ENCODE measurements at regions of chr4 and their contacts with region 1.

Region 1: DNA sequence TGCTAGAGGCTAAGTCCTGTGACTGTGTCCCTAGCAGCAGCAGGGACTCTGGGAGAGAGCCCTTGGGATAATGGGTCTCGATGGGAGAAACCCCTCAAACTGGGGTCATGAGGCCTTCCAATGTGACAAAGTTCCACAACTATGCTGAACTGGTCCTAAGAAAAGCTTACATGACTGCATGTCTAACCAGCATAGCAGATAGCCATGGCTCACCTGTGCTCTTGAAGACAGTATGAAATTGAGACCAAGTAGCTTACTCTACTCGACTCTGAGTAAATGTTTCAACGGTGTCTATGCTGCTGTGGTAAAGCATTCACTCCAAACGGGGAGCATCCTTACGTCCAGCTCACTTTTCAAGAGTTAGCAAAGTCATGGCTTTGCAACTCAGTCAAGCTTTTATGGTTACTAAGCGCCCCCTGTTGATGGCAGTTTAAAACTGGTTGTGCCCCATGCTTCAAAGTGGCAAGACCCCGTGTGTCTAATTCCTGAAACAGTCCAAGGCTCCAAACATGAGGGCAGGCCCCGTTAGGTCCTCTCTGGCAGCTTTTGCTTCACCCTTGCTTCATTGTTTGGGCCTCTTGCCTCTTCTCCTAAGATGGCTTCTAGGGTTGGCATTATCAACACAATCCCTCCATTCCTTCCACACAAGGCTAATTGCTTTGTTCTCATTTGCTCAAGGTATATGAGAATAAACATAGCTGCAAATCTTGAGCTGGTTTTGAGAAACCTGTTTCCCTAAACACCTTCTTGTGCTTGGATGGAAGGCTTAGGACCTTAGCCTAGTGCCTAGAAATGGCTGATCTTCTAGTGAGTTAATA is 46.6 kb downstream of the CCNG2 start:
- DNase-seq: peak; percentile 23
- H3K4me3 ChIP-seq: no peak overlapping the region
- CTCF ChIP-seq: peak; percentile 63

Region 2: GRCh38 chr4:76504613-76505465 is 698.8 kb before region 1 on chr4:
- CTCF ChIA-PET with region 1: interaction called, 13 read pairs
- POLR2A ChIA-PET with region 1: no interaction called
- DNase-seq: no peak
- H3K4me3 ChIP-seq: no peak overlapping the region
- CTCF ChIP-seq: peak; percentile 44

Region 3: GRCh38 chr4:76704133-76704881 is 499.3 kb before region 1 on chr4:
- CTCF ChIA-PET with region 1: no interaction called
- POLR2A ChIA-PET with region 1: no interaction called
- DNase-seq: no peak
- H3K4me3 ChIP-seq: no peak overlapping the region
- CTCF ChIP-seq: no peak

Region 4: GRCh38 chr4:77052352-77052751 is 151.2 kb before region 1 on chr4:
- CTCF ChIA-PET with region 1: interaction called, 76 read pairs
- POLR2A ChIA-PET with region 1: interaction called, 3 read pairs
- DNase-seq: peak; percentile 46
- H3K4me3 ChIP-seq: no peak overlapping the region
- CTCF ChIP-seq: peak; percentile 44

Region 5: GRCh38 chr4:77082886-77083608 is 120.5 kb before region 1 on chr4:
- CTCF ChIA-PET with region 1: interaction called, 20 read pairs
- POLR2A ChIA-PET with region 1: no interaction called
- DNase-seq: no peak
- H3K4me3 ChIP-seq: no peak overlapping the region
- CTCF ChIP-seq: no peak

Region 6: GRCh38 chr4:77095101-77095821 is 108.3 kb before region 1 on chr4:
- CTCF ChIA-PET with region 1: interaction called, 222 read pairs
- POLR2A ChIA-PET with region 1: no interaction called
- DNase-seq: no peak
- H3K4me3 ChIP-seq: no peak overlapping the region
- CTCF ChIP-seq: peak; percentile 87

Region 7: GRCh38 chr4:77156533-77156911 is 47.1 kb before region 1 on chr4:
- CTCF ChIA-PET with region 1: interaction called, 10 read pairs
- POLR2A ChIA-PET with region 1: no interaction called
- DNase-seq: peak; percentile 98
- H3K4me3 ChIP-seq: peak overlapping the region; percentile 96
- CTCF ChIP-seq: no peak

Region 8: DNA sequence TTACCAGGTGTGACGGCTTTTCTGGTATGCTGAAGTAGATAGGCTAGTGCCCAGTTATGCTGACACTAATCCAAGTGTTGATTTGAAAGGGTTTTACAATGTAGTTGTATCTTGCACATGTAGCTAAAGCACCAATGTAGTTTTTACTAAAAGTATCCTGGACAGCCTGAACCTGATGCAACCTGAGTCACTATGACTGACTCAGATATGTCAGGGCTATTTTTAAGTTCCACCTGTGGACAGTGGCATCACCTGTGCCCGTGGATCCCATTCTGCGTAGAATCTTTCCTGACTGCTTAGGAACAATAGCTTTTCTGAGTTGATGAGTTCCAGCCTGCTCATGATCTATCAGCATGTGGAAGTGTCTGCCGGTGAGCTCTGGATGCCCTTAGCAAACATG is 11.5 kb after region 1 on chr4:
- CTCF ChIA-PET with region 1: interaction called, 16 read pairs
- POLR2A ChIA-PET with region 1: no interaction called
- DNase-seq: no peak
- H3K4me3 ChIP-seq: no peak overlapping the region
- CTCF ChIP-seq: no peak

Measured in AG04449 (cell line).